Activated CD4-positive, alpha-beta T cell treated with anti-CD3 and anti-CD28 coated beads for 36 hours (primary cell): ENCODE measurements at regions of chr19 and their contacts with region 1.

Region 1: DNA sequence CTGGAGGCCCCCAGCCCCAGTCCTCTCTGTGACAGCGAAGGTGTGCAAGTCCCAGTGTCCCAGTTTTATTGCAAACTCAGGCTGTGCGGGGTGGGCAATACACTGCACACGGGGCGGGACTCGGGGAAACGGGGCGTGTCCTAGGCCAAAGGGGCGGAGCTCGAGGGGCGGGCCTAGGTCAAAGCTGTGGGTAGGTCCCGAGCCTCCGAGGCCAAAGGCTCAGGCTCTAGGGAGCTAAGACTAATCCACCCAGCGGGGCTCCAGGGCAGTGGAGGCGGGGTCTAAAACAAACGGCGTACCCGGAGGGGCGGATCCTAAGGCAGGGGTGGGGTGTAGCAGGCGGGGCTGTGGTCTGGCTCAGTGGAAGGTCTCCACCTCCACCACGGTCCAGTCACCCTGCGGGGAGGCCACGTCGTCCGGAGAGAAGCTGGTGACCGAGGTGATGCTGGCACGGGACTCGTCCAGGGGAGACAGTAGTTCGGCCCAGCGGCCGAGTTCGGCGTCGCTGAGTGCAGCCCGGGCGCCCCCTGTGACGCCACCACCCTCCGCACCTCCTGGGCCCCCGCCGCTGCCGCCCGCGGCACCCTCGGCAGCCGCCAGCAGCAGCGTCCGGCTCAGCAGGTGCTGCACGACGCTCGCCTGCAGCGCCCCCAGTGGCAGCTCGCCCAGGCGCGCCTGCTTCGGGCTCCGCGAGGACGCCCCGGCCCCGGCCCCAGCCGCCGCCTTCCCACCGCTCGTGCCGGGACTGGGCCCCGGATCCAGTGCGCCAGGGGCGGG is 5.3 kb downstream of the PRR36 start:
- DNase-seq: peak; percentile 92
- ATAC-seq: peak; percentile 75
- H3K4me3 Mint-ChIP-seq: peak overlapping the region; percentile 70
- H3K27ac Mint-ChIP-seq: peak overlapping the region; percentile 51
- H3K4me1 Mint-ChIP-seq: peaks cover 47% of the 10 kb centered on the region
- H3K27me3 Mint-ChIP-seq: peaks cover 29% of the 10 kb centered on the region

Region 2: GRCh38 chr19:7506385-7507328 is 362.2 kb before region 1 on chr19:
- CTCF ChIA-PET with region 1: no interaction called
- POLR2A ChIA-PET with region 1: no interaction called
- intact Hi-C with region 1: loop called in 1 of 2 experiments (anchors 5 kb)
- DNase-seq: peak; percentile 81
- ATAC-seq: peak; percentile 85
- H3K4me3 Mint-ChIP-seq: no peak overlapping the region
- H3K27ac Mint-ChIP-seq: no peak overlapping the region
- H3K4me1 Mint-ChIP-seq: peaks cover 13% of the 10 kb centered on the region
- H3K27me3 Mint-ChIP-seq: peaks cover 28% of the 10 kb centered on the region

Region 3: GRCh38 chr19:7852851-7853769 is 15.8 kb before region 1 on chr19:
- CTCF ChIA-PET with region 1: interaction called, 15 read pairs
- POLR2A ChIA-PET with region 1: no interaction called
- intact Hi-C with region 1: no loop called
- DNase-seq: peak; percentile 85
- ATAC-seq: peak; percentile 89
- H3K4me3 Mint-ChIP-seq: no peak overlapping the region
- H3K27ac Mint-ChIP-seq: no peak overlapping the region
- H3K4me1 Mint-ChIP-seq: peaks cover 3% of the 10 kb centered on the region
- H3K27me3 Mint-ChIP-seq: no peaks in the 10 kb centered on the region

Region 4: DNA sequence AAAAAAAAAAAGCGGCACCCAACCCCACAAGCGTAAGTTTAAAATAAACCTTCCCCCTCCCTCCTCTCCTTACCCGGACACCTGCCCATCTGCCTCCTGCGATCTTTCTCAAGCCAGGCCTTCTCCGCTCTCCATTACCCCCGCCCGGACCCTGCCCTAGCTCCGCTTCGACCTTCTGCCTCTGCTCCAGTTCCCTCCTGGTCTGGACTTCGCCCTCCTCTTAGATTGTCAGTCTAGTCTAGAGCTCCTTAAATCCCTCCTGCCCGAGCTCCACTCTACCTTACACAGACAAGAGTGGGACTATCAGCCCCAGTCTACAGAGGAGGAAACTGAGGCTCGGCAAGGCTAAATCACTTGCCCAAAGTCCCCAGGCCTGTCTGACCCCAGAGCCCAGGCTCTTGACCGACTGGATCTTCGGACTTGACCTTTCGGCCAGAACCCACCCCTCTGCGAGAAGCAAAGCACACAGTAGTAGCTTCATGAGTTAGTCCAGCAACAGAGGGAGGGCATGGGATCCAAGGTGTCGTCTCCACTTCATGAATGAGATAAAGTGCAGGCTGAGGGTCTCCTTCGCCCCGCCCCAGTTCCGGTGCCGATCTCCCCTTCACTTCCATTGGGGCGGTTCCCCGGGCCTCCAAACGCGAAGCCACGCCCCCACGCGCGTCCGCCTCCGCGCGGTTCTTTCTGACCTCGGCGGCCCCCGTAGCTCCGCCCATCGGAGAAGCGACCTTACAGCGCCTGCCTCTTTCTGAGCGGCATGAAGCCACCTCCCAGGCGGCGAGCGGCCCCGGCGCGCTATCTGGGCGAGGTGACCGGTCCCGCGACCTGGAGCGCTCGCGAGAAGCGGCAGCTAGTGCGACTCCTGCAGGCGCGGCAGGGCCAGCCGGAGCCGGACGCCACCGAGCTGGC is 51.0 kb after region 1 on chr19 and contains the start of gene SNAPC2:
- CTCF ChIA-PET with region 1: interaction called, 32 read pairs
- POLR2A ChIA-PET with region 1: interaction called, 8 read pairs
- intact Hi-C with region 1: loop called (anchors 1 kb)
- DNase-seq: peak; percentile 98
- ATAC-seq: peak; percentile 76
- H3K4me3 Mint-ChIP-seq: peak within 1 kb of the TSS; percentile 82
- H3K27ac Mint-ChIP-seq: peak within 1 kb of the TSS; percentile 87
- H3K4me1 Mint-ChIP-seq: peaks cover 32% of the 10 kb centered on the region
- H3K27me3 Mint-ChIP-seq: peaks cover 20% of the 10 kb centered on the region
- total RNA-seq, gene SNAPC2: 14.6 to 16.2 TPM

Region 5: GRCh38 chr19:8050274-8051096 is 181.6 kb after region 1 on chr19:
- CTCF ChIA-PET with region 1: no interaction called
- POLR2A ChIA-PET with region 1: no interaction called
- intact Hi-C with region 1: loop called in 1 of 2 experiments (anchors 1 kb)
- DNase-seq: peak; percentile 98
- ATAC-seq: peak; percentile 99
- H3K4me3 Mint-ChIP-seq: peak overlapping the region; percentile 36
- H3K27ac Mint-ChIP-seq: no peak overlapping the region
- H3K4me1 Mint-ChIP-seq: peaks cover 11% of the 10 kb centered on the region
- H3K27me3 Mint-ChIP-seq: peaks cover 4% of the 10 kb centered on the region

Region 6: DNA sequence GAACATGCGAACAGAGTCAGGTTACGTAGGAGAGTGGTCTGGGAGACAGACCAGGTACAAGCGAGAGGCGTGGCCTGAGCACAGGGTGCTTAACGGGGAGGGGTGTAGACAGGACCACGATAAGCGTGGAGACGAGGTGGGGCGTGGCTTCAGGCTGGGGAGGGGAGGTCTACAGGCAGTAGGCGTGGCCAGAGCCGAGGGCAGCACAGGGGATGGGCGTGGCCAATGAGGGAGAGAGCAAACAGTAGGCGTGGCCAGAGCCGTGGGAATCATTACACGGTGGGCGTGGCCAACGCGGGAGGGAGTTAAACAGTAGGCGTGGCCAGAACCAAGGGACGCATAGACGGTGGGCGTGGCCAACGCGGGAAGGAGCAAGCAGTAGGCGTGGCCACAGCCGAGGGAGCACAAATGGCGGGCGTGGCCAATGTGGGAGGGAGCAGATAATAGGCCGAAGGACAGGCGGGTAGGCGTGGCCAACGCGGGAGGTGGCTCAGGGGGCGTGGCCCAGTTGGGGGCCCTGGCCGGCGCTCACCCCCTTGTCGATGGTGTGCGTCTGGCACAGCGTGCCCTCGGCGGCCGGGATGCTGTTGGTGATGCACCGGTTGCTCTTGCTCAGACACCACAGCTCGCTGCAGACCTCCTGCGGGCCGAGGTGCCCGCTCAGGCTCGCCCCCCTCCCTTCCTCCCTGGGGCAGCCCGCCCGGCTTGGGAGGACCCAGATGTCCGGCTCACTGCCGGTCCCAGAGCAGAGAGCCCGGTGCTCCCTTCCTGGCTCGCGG is 723.6 kb after region 1 on chr19:
- CTCF ChIA-PET with region 1: no interaction called
- POLR2A ChIA-PET with region 1: no interaction called
- intact Hi-C with region 1: loop called in 1 of 2 experiments (anchors 2 kb)
- DNase-seq: peak; percentile 99
- ATAC-seq: peak; percentile 94
- H3K4me3 Mint-ChIP-seq: peak overlapping the region; percentile 70
- H3K27ac Mint-ChIP-seq: no peak overlapping the region
- H3K4me1 Mint-ChIP-seq: peaks cover 15% of the 10 kb centered on the region
- H3K27me3 Mint-ChIP-seq: no peaks in the 10 kb centered on the region